A549 (cell line): ENCODE measurements at regions of chr6 and their contacts with region 1.

Region 1: DNA sequence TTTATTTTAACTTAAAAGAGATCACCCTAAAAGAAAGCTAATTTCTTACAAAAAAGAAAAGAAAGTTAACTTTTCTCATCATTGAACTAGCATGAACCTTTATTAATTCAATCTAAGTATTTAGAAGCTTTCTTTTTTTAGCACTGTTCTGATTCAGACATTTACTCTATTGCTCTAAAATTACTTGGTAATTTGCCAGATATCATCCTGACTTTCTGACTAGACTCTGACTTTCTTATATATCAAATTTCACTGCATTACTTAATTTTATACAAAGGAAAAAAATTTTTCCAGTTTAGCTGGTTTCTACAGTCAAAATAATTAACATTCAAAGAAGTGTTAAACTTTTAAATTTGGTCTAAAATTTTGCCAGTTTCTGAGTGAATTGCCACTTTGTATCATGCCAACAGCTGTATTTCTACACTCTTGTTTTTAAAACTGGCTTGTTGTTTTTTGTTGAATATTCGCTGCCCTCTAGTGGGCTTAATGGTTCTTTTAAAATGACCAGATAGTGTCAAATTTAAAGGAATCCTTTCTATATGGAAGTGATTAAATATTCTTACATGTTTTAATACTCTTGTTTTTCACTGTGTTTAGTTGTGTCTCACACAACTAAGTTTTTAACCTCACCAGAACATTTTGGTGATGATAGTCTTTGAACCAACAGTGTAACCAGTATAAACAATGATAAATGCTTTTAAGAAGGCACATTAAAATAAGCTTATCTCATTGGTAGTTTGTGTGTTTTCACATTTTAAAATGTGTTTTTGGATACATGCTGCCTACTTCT is 102.0 kb downstream of the POPDC3 start:
- DNase-seq: peak; percentile 21 to 51
- ATAC-seq: peak; percentile 50 to 73; a peak in 5 of 6 replicates
- H3K4me3 ChIP-seq: no peak overlapping the region
- H3K27ac ChIP-seq: peak overlapping the region in 1 of 2 experiments; percentile 46; a peak in 1 of 6 replicates
- H3K4me1 ChIP-seq: peaks cover 32% of the 10 kb centered on the region
- CTCF ChIP-seq: peak; percentile 71
- EP300 ChIP-seq: no peak
- POLR2A ChIP-seq: no peak
- RAD21 ChIP-seq: peak; percentile 73 to 83

Region 2: DNA sequence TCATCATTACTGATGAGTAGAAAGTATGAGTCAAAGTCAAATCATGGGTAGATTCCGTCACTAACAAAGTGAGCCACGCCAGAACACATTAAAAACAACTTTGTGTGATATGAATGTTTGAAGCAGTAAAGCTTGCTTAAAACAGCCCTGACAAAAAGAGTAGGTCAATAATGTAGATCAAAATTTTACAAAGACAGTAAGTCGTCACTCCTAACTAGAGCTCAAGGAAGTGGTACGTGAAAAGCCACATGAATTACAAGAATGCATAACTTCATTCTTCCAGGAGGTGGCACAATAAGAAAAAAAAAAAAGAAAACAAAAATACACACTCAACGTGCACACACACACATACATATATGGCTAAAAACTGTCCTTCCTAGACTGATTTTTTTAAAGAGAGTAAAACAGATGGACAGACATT is 288.0 kb before region 1 on chr6:
- CTCF ChIA-PET with region 1: interaction called, 35 read pairs
- POLR2A ChIA-PET with region 1: no interaction called
- DNase-seq: peak; percentile 9 to 56
- ATAC-seq: peak; percentile 70 to 83; a peak in 5 of 6 replicates
- H3K4me3 ChIP-seq: no peak overlapping the region
- H3K27ac ChIP-seq: no peak overlapping the region
- H3K4me1 ChIP-seq: 0 out of 3 replicates have a peak, but pooled peaks cover 3% of the 10 kb centered on the region
- CTCF ChIP-seq: peak; percentile 48; the same call in 2 of the 3 replicates
- EP300 ChIP-seq: no peak
- POLR2A ChIP-seq: no peak
- RAD21 ChIP-seq: peak; percentile 56 to 57

Region 3: GRCh38 chr6:104995989-104996617 is 81.7 kb before region 1 on chr6:
- CTCF ChIA-PET with region 1: interaction called, 17 read pairs
- POLR2A ChIA-PET with region 1: no interaction called
- DNase-seq: peak in 1 of 2 experiments; percentile 11
- ATAC-seq: peak; percentile 19 to 61; a peak in 3 of 6 replicates
- H3K4me3 ChIP-seq: no peak overlapping the region
- H3K27ac ChIP-seq: peak overlapping the region in 1 of 2 experiments; percentile 50; a peak in 1 of 6 replicates
- H3K4me1 ChIP-seq: no peaks in the 10 kb centered on the region
- CTCF ChIP-seq: peak; percentile 16; the same call in 1 of the 3 replicates
- EP300 ChIP-seq: no peak
- POLR2A ChIP-seq: no peak
- RAD21 ChIP-seq: peak; percentile 38